Gastrocnemius medialis (tissue), 4 donors: ENCODE measurements at regions of chr19 and their contacts with region 1.

Region 1: DNA sequence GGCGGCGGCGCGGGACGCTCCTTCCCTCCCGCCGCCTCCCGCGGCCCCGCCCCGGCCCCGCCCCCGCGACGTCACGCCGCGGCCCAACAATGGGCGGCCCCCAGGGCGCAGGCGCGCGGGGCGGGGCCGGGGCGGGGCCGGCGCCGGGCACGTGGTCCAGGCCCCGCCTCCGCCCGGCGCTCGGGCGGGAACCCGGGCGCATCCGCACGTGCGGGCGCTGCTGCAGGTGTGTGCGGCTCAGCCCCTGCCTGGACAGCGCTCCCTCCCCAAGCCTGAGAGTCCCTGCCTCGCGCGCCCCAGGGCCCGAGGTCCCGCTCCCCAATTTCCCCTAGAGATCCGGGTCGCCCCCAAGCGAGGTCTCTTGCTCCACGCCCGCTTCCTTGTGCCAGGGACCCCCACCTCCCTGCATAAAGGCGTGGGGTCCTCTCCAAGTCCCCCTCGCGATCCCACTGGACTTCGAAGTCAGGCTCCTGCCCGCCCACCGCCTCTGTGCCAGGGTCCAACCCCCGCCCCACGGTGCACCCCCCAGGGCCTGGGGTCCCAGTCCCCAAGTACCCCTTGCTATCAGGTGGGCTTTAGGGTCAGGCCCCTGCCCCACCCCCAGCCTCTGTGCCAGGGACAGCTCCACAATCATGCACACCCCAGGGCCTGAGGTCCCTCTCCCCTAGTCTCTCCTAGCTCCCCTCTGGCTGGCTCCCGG is at the start of gene MEX3D:
- DNase-seq: peak; percentile 37 to 62
- ATAC-seq: peak; percentile 79 to 90
- H3K4me3 ChIP-seq: peak within 1 kb of the TSS; percentile 37 to 53 (median 51)
- H3K27ac ChIP-seq: peak within 1 kb of the TSS in 3 of 4 donors; percentile 13 to 62 (median 52)
- H3K4me1 ChIP-seq: peaks cover 4 to 7% of the 10 kb centered on the region in 2 donors
- H3K27me3 ChIP-seq: peaks cover 6 to 11% (median 8%) of the 10 kb centered on the region in 3 donors
- CTCF ChIP-seq: no peak
- POLR2A ChIP-seq: no peak
- total RNA-seq, gene MEX3D: 2.4 to 7.9 (median 5.3) TPM

Region 2: GRCh38 chr19:1213391-1214286 is 354.8 kb before region 1 on chr19:
- in situ Hi-C with region 1: no loop called
- intact Hi-C with region 1: no loop called
- DNase-seq: peak; percentile 59 to 93
- ATAC-seq: peak; percentile 38 to 46
- H3K4me3 ChIP-seq: peak overlapping the region; percentile 24 to 41 (median 36)
- H3K27ac ChIP-seq: peak overlapping the region; percentile 94 to 98 (median 96)
- H3K4me1 ChIP-seq: peaks cover 87 to 96% of the 10 kb centered on the region in 2 donors
- H3K27me3 ChIP-seq: no peaks in the 10 kb centered on the region
- CTCF ChIP-seq: no peak
- POLR2A ChIP-seq: peak; percentile 32 to 59

Region 3: GRCh38 chr19:1605236-1606137 is 37.0 kb after region 1 on chr19 and contains the start of gene UQCR11:
- in situ Hi-C with region 1: no loop called
- intact Hi-C with region 1: loop called (anchors 5 kb)
- DNase-seq: peak; percentile 93 to 95
- ATAC-seq: peak; percentile 94 to 96
- H3K4me3 ChIP-seq: peak within 1 kb of the TSS; percentile 83 to 99 (median 96)
- H3K27ac ChIP-seq: peak within 1 kb of the TSS; percentile 92 to 99 (median 98)
- H3K4me1 ChIP-seq: peaks cover 23 to 40% of the 10 kb centered on the region in 2 donors
- H3K27me3 ChIP-seq: no peaks in the 10 kb centered on the region
- CTCF ChIP-seq: peak; percentile 34 to 58 (median 52)
- POLR2A ChIP-seq: peak; percentile 52 to 79
- total RNA-seq, gene UQCR11: 106 to 173 (median 154) TPM